Gastrocnemius medialis (tissue), 4 donors: ENCODE measurements at regions of chr11 and their contacts with region 1.

Region 1: DNA sequence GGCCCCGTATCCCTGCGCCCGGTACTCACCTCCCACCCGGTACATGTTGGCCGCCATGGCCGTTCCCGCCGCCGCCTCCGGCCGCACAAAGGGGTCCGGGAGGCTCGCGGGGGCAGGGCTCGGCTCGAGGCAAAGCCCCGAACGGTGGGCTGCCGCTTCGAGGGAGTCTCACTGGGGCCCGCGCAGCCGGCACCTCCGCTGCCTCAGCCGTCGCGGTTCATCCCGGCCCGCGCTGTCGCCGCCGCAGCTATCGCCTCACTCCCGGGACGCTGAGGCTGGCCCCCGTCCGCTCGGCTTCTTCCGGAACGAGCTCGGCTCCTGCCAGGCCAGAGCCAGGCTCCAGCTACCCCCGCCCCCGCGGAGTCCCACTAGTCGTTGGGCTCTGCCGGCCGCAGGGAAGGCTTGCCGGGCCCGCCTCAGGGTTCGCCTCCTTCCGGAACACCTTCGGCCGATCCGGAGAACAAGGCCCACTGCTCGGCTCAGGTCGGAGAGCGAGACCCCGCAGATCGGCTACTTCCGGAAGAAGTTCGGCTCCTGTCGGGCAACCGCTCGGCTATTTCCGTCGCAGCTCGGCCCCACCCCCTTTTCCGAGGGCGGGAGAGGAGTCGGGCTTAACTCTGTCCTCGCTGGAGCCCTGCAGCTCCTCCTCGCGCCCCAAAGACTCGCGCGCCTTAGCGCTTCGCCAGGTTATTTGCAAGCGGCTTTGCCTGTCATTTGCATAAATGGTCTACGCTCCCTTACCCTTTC is at the start of gene MTA2:
- DNase-seq: peak; percentile 97
- ATAC-seq: peak; percentile 83 to 85
- H3K4me3 ChIP-seq: peak within 1 kb of the TSS; percentile 84 to 99 (median 98)
- H3K27ac ChIP-seq: peak within 1 kb of the TSS; percentile 87 to 97 (median 94)
- H3K4me1 ChIP-seq: peaks cover 17 to 29% of the 10 kb centered on the region in 2 donors
- H3K27me3 ChIP-seq: no peaks in the 10 kb centered on the region
- CTCF ChIP-seq: no peak
- POLR2A ChIP-seq: peak; percentile 43 to 57
- total RNA-seq, gene MTA2: 28.0 to 47.1 (median 31.7) TPM

Region 2: GRCh38 chr11:62612366-62613290 is 11.1 kb after region 1 on chr11 and contains the starts of genes EML3 and ROM1:
- in situ Hi-C with region 1: no loop called
- intact Hi-C with region 1: loop called (anchors 1 kb)
- DNase-seq: peak; percentile 80 to 82
- ATAC-seq: peak; percentile 82 to 83
- H3K4me3 ChIP-seq: peak within 1 kb of the TSS; percentile 71 to 93 (median 86)
- H3K27ac ChIP-seq: peak within 1 kb of the TSS; percentile 90 to 95 (median 92)
- H3K4me1 ChIP-seq: peaks cover 16 to 21% of the 10 kb centered on the region in 2 donors
- H3K27me3 ChIP-seq: no peaks in the 10 kb centered on the region
- CTCF ChIP-seq: peak in 4 of 5 experiments; percentile 91 to 99 (median 94)
- POLR2A ChIP-seq: no peak
- total RNA-seq, gene EML3: 4.7 to 7.9 (median 7.0) TPM
- total RNA-seq, gene ROM1: 1.6 to 3.7 (median 2.7) TPM

Region 3: GRCh38 chr11:62841361-62842184 is 240.0 kb after region 1 on chr11:
- in situ Hi-C with region 1: no loop called
- intact Hi-C with region 1: no loop called
- DNase-seq: peak; percentile 85 to 91
- ATAC-seq: peak; percentile 73 to 76
- H3K4me3 ChIP-seq: peak overlapping the region; percentile 82 to 100 (median 96)
- H3K27ac ChIP-seq: peak overlapping the region; percentile 97 to 99 (median 98)
- H3K4me1 ChIP-seq: peaks cover 20% of the 10 kb centered on the region in 2 donors
- H3K27me3 ChIP-seq: no peaks in the 10 kb centered on the region
- CTCF ChIP-seq: peak in 1 of 5 experiments; percentile 5
- POLR2A ChIP-seq: peak; percentile 99 to 100